Panc1 (cell line): ENCODE measurements at regions of chr12 and their contacts with region 1.

Region 1: DNA sequence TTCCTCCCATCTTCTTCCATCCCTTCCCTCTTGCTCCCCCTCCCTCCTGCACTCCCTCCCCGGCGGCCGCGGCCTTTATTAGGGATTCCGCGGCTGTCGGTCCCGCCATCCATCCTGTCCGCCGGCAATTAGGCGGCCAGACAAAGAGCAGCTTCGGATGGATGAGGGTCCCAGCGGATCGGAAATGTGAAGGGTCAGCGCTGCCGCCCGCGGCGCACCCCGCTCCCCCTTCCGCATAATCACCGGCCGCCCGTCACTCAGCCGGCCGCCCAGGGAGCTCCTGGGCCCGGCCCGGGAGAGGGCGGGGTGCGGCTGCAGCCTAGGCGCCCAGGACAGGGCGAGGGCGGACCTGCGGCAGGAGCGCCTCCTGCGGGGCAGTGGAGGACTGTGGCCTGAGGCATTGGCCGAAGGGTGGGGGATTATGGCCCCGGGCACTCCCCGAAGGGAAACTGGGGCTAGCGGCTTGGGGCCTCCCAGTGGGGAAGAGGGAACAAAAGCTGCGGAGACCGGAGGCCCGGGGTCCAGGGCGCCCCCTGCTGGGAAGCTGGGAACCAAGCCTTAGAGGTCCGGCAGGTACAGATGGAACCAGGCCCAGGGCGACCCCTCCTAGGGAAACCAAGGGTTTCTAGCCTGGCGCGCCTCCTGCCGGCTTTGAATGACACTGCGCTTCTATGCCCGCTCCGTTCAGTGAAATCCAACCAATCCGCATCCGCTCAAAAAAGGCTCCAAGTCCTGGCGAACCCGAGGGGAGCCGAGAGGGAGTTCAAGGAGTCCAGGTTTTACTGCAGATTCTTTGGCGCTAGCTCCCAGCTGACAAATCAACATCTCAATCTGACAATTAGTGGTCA is 4.4 kb upstream of the DNAJC22 start:
- DNase-seq: peak; percentile 39
- ATAC-seq: peak; percentile 51
- H3K4me3 ChIP-seq: peak overlapping the region; percentile 8 to 31; a peak in 2 of 4 replicates
- H3K27ac ChIP-seq: no peak overlapping the region
- H3K4me1 ChIP-seq: peaks cover 20% of the 10 kb centered on the region
- H3K27me3 ChIP-seq: no peaks in the 10 kb centered on the region; the same call in 1 of the 2 replicates
- CTCF ChIP-seq: peak; percentile 96

Region 2: GRCh38 chr12:49331380-49332222 is 10.7 kb before region 1 on chr12:
- CTCF ChIA-PET with region 1: interaction called, 19 read pairs
- POLR2A ChIA-PET with region 1: interaction called, 6 read pairs
- in situ Hi-C with region 1: no loop called
- intact Hi-C with region 1: no loop called
- DNase-seq: no peak
- ATAC-seq: peak; percentile 83
- H3K4me3 ChIP-seq: no peak overlapping the region
- H3K27ac ChIP-seq: no peak overlapping the region
- H3K4me1 ChIP-seq: peaks cover 6% of the 10 kb centered on the region; the same call in 1 of the 2 replicates
- H3K27me3 ChIP-seq: no peaks in the 10 kb centered on the region
- CTCF ChIP-seq: peak; percentile 90

Region 3: DNA sequence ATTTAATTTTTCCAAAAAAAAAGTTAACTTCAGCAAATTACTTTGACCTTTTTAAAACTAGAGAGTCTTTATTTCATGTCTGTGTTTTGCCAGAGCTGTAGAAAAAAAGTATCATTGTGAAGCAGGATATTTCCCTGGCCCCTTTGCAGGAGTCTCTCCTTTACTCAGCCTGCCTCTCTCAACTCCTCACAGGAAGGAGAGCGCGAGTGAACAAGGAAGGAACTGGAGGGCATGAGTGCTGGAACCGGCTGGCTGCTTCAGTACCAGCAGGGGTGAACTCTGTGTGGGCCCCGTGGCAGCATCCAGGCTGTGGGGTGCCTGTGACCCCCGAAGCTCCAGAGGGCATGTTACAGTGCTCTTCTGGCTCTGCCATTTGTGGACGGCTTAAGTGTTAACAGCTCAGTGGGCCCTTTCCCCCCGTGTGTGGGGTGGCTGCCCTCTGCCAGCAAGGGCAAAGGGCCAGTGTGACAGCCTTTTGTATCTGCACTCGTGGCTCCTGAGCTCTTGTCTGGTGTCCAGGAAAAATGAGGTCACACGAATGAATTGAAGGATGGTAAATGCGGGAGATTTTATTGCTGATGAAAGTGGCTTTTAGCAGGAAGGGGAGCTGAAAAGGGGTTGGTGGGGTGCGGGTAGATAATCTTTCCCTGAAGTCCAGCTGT is 119.9 kb after region 1 on chr12:
- CTCF ChIA-PET with region 1: interaction called, 4 read pairs
- POLR2A ChIA-PET with region 1: interaction called, 21 read pairs
- in situ Hi-C with region 1: no loop called
- intact Hi-C with region 1: no loop called
- DNase-seq: no peak
- ATAC-seq: no peak
- H3K4me3 ChIP-seq: no peak overlapping the region
- H3K27ac ChIP-seq: no peak overlapping the region
- H3K4me1 ChIP-seq: no peaks in the 10 kb centered on the region
- H3K27me3 ChIP-seq: no peaks in the 10 kb centered on the region
- CTCF ChIP-seq: no peak